ENCODE measurements at regions of chr1 and their contacts with region 1.

Region 1: GRCh38 chr1:205137901-205138300 is 16.1 kb upstream of the RBBP5 start:
- DNase-seq: peak in 1 of 7 donors; percentile 35
- H3K4me3 ChIP-seq: no peak overlapping the region
- H3K27ac ChIP-seq: no peak overlapping the region
- H3K4me1 ChIP-seq: peaks cover 10 to 11% of the 10 kb centered on the region in 2 donors
- H3K27me3 ChIP-seq: no peaks in the 10 kb centered on the region
- CTCF ChIP-seq: no peak
- POLR2A ChIP-seq: no peak

Region 2: GRCh38 chr1:205211169-205211838 is 73.4 kb after region 1 on chr1 and contains the start of gene DSTYK:
- intact Hi-C with region 1: no loop called
- DNase-seq: peak; percentile 93 to 98 (median 96)
- H3K4me3 ChIP-seq: peak within 1 kb of the TSS; percentile 72 to 95 (median 90)
- H3K27ac ChIP-seq: peak within 1 kb of the TSS; percentile 77 to 97 (median 90)
- H3K4me1 ChIP-seq: peaks cover 9 to 12% of the 10 kb centered on the region in 2 donors
- H3K27me3 ChIP-seq: no peaks in the 10 kb centered on the region
- CTCF ChIP-seq: peak in 1 of 6 experiments; percentile 11
- POLR2A ChIP-seq: peak; percentile 73 to 92
- total RNA-seq, gene DSTYK: 14.9 to 22.9 (median 17.7) TPM

Region 3: GRCh38 chr1:205248793-205249601 is 111.1 kb after region 1 on chr1:
- intact Hi-C with region 1: loop called in 1 of 2 experiments (anchors 10 kb)
- DNase-seq: peak; percentile 81 to 94 (median 89)
- H3K4me3 ChIP-seq: no peak overlapping the region
- H3K27ac ChIP-seq: peak overlapping the region; percentile 43 to 88 (median 71)
- H3K4me1 ChIP-seq: peaks cover 17 to 21% of the 10 kb centered on the region in 2 donors
- H3K27me3 ChIP-seq: no peaks in the 10 kb centered on the region
- CTCF ChIP-seq: no peak
- POLR2A ChIP-seq: peak in 1 of 2 donors; percentile 8

Region 4: DNA sequence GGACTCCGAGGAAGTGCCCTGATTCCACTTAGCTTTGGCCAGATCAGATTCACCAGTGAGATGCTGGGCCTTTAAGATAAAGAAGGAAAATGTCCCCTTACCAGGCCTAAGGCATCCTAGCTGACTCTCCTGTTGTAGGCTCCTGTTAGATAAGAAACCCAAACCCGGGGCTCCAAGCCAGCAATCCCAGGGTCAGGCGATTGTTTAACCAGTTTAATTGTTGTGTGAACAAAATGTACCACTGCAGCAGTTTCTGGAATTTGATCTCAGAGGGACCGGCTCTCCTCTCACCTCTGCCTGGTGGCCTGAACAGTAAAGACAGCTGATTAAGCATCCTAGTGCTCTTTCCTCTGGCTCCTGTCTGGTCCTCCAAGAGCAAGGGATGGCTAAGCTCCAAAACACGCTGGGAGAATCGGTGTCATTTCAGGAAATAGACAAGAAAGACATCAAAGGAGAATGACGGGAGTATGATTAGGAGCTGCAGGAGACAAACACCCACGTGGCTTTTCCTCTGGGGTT is 228.1 kb after region 1 on chr1:
- intact Hi-C with region 1: no loop called
- DNase-seq: peak in 6 of 7 donors; percentile 60 to 84 (median 74)
- H3K4me3 ChIP-seq: no peak overlapping the region
- H3K27ac ChIP-seq: peak overlapping the region in 4 of 5 donors; percentile 25 to 70 (median 61)
- H3K4me1 ChIP-seq: peaks cover 19 to 43% of the 10 kb centered on the region in 2 donors
- H3K27me3 ChIP-seq: no peaks in the 10 kb centered on the region
- CTCF ChIP-seq: peak in 1 of 6 experiments; percentile 14
- POLR2A ChIP-seq: no peak

Measured in adrenal gland (tissue), 19 donors.